GM18951 (cell line): ENCODE measurements at regions of chr7 and their contacts with region 1.

Region 1: GRCh38 chr7:7761340-7761980 is 43.1 kb upstream of the RPA3 start:
- POLR2A ChIP-seq: no peak

Region 2: GRCh38 chr7:8190119-8190895 is 428.8 kb after region 1 on chr7:
- in situ Hi-C with region 1: loop called (anchors 10 kb)
- POLR2A ChIP-seq: no peak